ENCODE measurements at regions of chr11 and their contacts with region 1.

Region 1: GRCh38 chr11:74726547-74727182 is 4.6 kb downstream of the CHRDL2 start:
- DNase-seq: peak; percentile 68 to 82 (median 79)
- ATAC-seq: peak; percentile 81 to 94 (median 90)
- H3K4me3 ChIP-seq: no peak overlapping the region
- H3K27ac ChIP-seq: peak overlapping the region in 1 of 12 donors; percentile 72
- H3K4me1 ChIP-seq: peaks cover 0 to 22% (median 11%) of the 10 kb centered on the region in 12 donors
- H3K27me3 ChIP-seq: peaks cover 4 to 31% (median 11%) of the 10 kb centered on the region in 9 donors
- CTCF ChIP-seq: peak; percentile 78 to 95 (median 91)
- POLR2A ChIP-seq: no peak

Region 2: DNA sequence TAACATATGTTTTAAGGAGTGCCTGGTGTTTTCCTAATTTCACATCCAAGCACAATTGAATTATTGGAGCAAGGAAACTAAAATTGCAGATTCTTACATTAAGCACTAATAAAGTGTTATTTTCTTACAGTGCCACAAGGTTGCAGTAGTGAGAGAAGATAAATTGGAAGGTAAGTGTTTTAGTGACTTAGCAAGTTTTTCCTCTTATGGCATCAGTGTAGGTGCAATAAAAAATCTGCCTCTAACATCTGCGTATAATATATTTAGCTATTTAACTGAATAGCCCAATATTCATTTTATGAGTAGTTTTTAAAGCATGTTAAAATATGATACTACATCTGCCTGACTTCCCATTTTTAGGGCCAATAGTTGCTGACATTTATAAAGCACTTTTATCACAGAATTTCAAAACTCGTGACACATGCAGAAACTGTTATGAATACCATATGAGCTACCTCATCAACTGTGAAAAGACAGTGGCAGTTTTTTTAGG is 115.2 kb before region 1 on chr11:
- intact Hi-C with region 1: loop called in 4 of 10 experiments (anchors 5 to 10 kb)
- DNase-seq: no peak
- ATAC-seq: peak in 2 of 4 donors; percentile 18 to 60
- H3K4me3 ChIP-seq: no peak overlapping the region
- H3K27ac ChIP-seq: peak overlapping the region in 2 of 12 donors; percentile 73 to 83
- H3K4me1 ChIP-seq: peaks cover 0 to 19% (median 0%) of the 10 kb centered on the region in 12 donors
- H3K27me3 ChIP-seq: no peaks in the 10 kb centered on the region
- CTCF ChIP-seq: peak in 11 of 12 donors; percentile 25 to 50 (median 38)
- POLR2A ChIP-seq: no peak

Region 3: DNA sequence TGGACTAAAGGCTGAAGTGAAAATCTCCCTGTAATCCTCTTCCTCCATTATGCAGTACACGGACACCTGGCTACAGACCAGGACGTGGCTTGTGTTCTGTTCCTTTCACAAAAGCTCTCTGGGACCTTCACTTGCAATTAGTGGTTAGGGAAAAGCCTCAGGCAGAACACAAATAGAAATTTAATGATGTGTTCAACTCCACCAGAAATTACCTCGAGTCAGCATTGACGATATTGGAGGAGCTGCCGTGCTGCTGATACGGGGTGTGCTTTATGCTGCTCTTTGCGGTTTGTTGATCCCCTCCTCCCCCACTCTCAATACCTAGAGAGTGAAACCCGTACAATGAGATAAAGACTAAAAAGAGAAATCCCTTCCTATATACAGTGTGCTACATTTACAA is 85.4 kb before region 1 on chr11:
- intact Hi-C with region 1: loop called in 6 of 10 experiments (anchors 5 kb)
- DNase-seq: no peak
- ATAC-seq: no peak
- H3K4me3 ChIP-seq: no peak overlapping the region
- H3K27ac ChIP-seq: peak overlapping the region in 1 of 12 donors; percentile 84
- H3K4me1 ChIP-seq: peaks cover 0 to 9% (median 0%) of the 10 kb centered on the region in 12 donors
- H3K27me3 ChIP-seq: no peaks in the 10 kb centered on the region
- CTCF ChIP-seq: no peak
- POLR2A ChIP-seq: no peak

Region 4: GRCh38 chr11:74672956-74673692 is 53.5 kb before region 1 on chr11:
- intact Hi-C with region 1: loop called in 1 of 10 experiments (anchors 10 kb)
- DNase-seq: peak; percentile 57 to 92 (median 83)
- ATAC-seq: peak; percentile 22 to 86 (median 82)
- H3K4me3 ChIP-seq: no peak overlapping the region
- H3K27ac ChIP-seq: peak overlapping the region in 11 of 12 donors; percentile 53 to 89 (median 65)
- H3K4me1 ChIP-seq: peaks cover 0 to 15% (median 11%) of the 10 kb centered on the region in 12 donors
- H3K27me3 ChIP-seq: no peaks in the 10 kb centered on the region
- CTCF ChIP-seq: no peak
- POLR2A ChIP-seq: no peak